ENCODE measurements at regions of chr3 and their contacts with region 1.

Region 1: GRCh38 chr3:24237971-24238767 is 256.5 kb downstream of the THRB start:
- DNase-seq: no peak
- H3K4me3 ChIP-seq: no peak overlapping the region
- H3K27ac ChIP-seq: peak overlapping the region; percentile 66 to 74
- H3K4me1 ChIP-seq: peaks cover 0 to 60% (median 44%) of the 10 kb centered on the region in 4 donors
- H3K27me3 ChIP-seq: no peaks in the 10 kb centered on the region
- CTCF ChIP-seq: peak; percentile 57 to 76

Region 2: DNA sequence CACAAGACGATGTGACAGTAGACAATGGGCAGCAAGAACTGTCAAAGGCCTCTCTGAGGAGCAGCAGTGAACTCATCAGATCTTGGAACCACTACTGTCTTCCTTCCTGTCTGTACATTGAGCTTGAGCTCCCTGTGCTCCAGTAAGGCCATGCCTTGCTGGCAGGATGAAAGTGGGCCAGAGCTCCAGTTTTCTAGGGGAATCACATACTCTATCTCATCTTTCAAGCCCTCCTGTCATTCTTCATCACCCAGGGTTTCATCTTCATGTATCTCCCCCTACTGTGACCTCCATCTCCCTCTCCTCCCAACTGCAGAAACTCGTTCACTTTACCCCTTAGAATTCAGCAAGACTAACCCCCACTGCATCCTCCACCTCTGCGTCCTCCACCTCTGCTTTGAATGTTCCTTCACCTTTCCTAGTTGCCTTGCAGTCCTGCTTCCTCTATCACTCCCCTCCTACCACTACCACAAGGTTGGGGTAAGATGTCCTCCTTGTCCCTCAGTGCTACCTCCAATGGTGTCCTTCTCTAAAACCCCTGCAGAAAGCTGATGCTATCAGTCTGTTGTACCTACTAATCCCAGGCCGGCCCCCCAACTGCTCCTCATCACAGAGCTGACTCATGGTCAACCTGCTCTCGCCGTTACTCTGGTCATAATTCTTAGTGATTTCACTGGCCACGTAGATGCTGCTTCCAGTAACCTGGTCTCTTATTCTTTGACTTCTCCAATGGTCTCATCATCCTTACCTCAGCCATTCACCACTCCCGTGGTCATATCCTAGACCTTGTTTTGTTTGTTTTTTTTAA is 343.7 kb before region 1 on chr3:
- intact Hi-C with region 1: loop called (anchors 10 kb)
- DNase-seq: no peak
- H3K4me3 ChIP-seq: no peak overlapping the region
- H3K27ac ChIP-seq: no peak overlapping the region
- H3K4me1 ChIP-seq: no peaks in the 10 kb centered on the region
- H3K27me3 ChIP-seq: no peaks in the 10 kb centered on the region
- CTCF ChIP-seq: no peak

Region 3: GRCh38 chr3:23999012-23999641 is 239.0 kb before region 1 on chr3:
- intact Hi-C with region 1: loop called (anchors 5 kb)
- DNase-seq: peak; percentile 81 to 84
- H3K4me3 ChIP-seq: no peak overlapping the region
- H3K27ac ChIP-seq: peak overlapping the region in 1 of 2 donors; percentile 20
- H3K4me1 ChIP-seq: peaks cover 0 to 16% (median under 1%) of the 10 kb centered on the region in 4 donors
- H3K27me3 ChIP-seq: no peaks in the 10 kb centered on the region
- CTCF ChIP-seq: peak; percentile 91 to 99

Region 4: DNA sequence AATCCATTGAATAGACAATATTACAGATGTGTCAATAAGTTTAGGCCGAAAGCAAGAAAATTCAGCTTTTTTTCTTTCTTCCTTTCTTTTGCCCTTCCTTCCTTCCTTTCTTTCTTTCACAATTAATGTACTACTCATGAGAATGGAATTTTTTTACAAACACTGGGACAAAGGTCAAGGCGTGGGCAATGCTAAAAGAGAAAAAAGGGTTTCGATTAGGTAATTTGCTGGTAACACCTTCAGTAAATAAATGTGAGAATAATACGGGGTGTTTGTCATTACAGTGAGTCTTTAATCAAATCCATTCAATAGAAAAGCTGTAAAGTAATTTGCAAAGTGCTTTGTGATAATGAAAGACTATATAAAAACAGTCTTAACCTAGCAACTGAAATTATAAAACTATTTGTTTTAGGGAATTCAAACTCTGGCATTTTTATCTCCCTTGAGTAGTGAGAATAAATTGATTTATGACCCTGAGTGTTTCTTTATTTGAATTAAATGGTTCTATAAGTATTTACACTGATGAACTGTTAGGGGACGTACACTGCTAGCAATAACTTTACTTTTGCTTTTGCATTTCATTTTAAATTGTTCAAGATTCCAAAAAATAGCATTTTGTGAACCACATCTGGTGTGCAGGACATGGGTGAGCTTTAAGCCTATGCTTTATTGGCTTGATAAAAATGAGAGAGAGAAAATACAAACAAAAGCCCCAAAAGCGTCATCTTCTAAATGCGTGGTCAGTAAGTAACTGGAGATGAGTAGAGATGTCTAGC is 360.7 kb after region 1 on chr3:
- intact Hi-C with region 1: no loop called
- DNase-seq: no peak
- H3K4me3 ChIP-seq: no peak overlapping the region
- H3K27ac ChIP-seq: no peak overlapping the region
- H3K4me1 ChIP-seq: peaks cover 0 to 5% (median 0%) of the 10 kb centered on the region in 4 donors
- H3K27me3 ChIP-seq: no peaks in the 10 kb centered on the region
- CTCF ChIP-seq: no peak